PC-3 (cell line): ENCODE measurements at regions of chr22 and their contacts with region 1.

Region 1: GRCh38 chr22:21938071-21938822 is 14.4 kb downstream of the PPM1F start:
- DNase-seq: peak; percentile 82
- ATAC-seq: peak; percentile 76
- H3K4me3 ChIP-seq: peak overlapping the region; percentile 69
- H3K27ac ChIP-seq: peak overlapping the region; percentile 93
- H3K4me1 ChIP-seq: peaks cover 36% of the 10 kb centered on the region
- H3K27me3 ChIP-seq: no peaks in the 10 kb centered on the region
- CTCF ChIP-seq: peak; percentile 78

Region 2: DNA sequence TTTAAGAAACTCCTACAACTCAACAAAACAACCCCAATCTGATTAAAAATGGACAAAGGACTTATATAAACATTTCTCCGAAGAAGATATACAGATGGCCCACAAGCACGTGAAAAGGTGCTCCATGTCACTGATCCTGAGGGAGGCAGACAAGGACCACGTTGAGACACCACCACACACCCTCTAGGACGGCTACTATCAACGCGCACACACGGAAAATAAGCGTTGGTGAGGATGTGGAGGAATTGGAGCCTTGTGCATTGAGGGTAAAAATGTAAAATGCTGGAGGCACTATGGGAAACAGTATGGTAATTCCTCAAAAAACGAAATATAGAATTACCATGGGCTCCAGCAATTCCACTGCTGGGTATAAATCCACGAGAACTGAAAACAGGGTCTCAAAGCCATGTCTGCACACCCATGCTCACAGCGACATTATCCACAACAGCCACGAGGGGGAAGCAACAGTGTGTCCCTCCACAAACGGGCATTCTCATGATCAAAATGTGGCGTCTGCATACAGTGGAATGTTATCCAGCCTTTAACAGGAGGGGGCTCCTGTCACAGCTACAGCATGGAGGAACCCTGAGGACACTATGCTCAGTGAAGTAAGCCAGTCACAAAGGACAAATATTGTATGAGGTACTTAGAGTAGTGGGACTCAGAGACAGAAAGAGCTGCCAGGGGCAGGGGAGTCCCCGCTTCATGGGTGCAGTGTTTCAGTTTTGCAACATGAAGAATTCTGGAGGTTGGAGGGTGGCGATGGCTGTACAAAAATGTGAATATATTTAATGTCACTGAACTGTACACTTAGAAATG is 225.1 kb before region 1 on chr22:
- CTCF ChIA-PET with region 1: no interaction called
- POLR2A ChIA-PET with region 1: no interaction called
- intact Hi-C with region 1: loop called (anchors 1 kb)
- DNase-seq: peak; percentile 73
- ATAC-seq: peak; percentile 83
- H3K4me3 ChIP-seq: peak overlapping the region; percentile 19; the same call in 1 of the 2 replicates
- H3K27ac ChIP-seq: no peak overlapping the region
- H3K4me1 ChIP-seq: peaks cover 27% of the 10 kb centered on the region
- H3K27me3 ChIP-seq: no peaks in the 10 kb centered on the region
- CTCF ChIP-seq: peak; percentile 81

Region 3: GRCh38 chr22:21771631-21771976 is 166.6 kb before region 1 on chr22:
- CTCF ChIA-PET with region 1: no interaction called
- POLR2A ChIA-PET with region 1: no interaction called
- intact Hi-C with region 1: loop called (anchors 5 kb)
- DNase-seq: no peak
- ATAC-seq: no peak
- H3K4me3 ChIP-seq: no peak overlapping the region
- H3K27ac ChIP-seq: no peak overlapping the region
- H3K4me1 ChIP-seq: no peaks in the 10 kb centered on the region
- H3K27me3 ChIP-seq: no peaks in the 10 kb centered on the region
- CTCF ChIP-seq: no peak

Region 4: GRCh38 chr22:21952586-21953571 is 14.6 kb after region 1 on chr22 and contains the start of gene PPM1F:
- CTCF ChIA-PET with region 1: interaction called, 10 read pairs
- POLR2A ChIA-PET with region 1: no interaction called
- intact Hi-C with region 1: loop called (anchors 2 kb)
- DNase-seq: peak; percentile 76
- ATAC-seq: peak; percentile 76
- H3K4me3 ChIP-seq: peak within 1 kb of the TSS; percentile 85
- H3K27ac ChIP-seq: no peak within 1 kb of the TSS
- H3K4me1 ChIP-seq: no peaks in the 10 kb centered on the region
- H3K27me3 ChIP-seq: no peaks in the 10 kb centered on the region
- CTCF ChIP-seq: peak; percentile 70
- total RNA-seq, gene PPM1F: 40.4 and 46.2 TPM in 2 replicates